Cardiac septum (tissue), 1 donor: ENCODE measurements at regions of chr12 and their contacts with region 1.

Region 1: GRCh38 chr12:30985814-30986452 is 59.4 kb downstream of the TSPAN11 start:
- DNase-seq: no peak

Region 2: GRCh38 chr12:30847259-30847658 is 138.7 kb before region 1 on chr12:
- intact Hi-C with region 1: loop called (anchors 1 kb)
- DNase-seq: no peak

Region 3: GRCh38 chr12:30885321-30885720 is 100.6 kb before region 1 on chr12:
- intact Hi-C with region 1: no loop called
- DNase-seq: no peak

Region 4: GRCh38 chr12:30930238-30930637 is 55.7 kb before region 1 on chr12:
- intact Hi-C with region 1: loop called (anchors 5 kb)
- DNase-seq: no peak

Region 5: GRCh38 chr12:31238764-31239387 is 252.9 kb after region 1 on chr12:
- intact Hi-C with region 1: loop called (anchors 10 kb)
- DNase-seq: peak; percentile 73